Calu3 (cell line): ENCODE measurements at regions of chr1 and their contacts with region 1.

Region 1: DNA sequence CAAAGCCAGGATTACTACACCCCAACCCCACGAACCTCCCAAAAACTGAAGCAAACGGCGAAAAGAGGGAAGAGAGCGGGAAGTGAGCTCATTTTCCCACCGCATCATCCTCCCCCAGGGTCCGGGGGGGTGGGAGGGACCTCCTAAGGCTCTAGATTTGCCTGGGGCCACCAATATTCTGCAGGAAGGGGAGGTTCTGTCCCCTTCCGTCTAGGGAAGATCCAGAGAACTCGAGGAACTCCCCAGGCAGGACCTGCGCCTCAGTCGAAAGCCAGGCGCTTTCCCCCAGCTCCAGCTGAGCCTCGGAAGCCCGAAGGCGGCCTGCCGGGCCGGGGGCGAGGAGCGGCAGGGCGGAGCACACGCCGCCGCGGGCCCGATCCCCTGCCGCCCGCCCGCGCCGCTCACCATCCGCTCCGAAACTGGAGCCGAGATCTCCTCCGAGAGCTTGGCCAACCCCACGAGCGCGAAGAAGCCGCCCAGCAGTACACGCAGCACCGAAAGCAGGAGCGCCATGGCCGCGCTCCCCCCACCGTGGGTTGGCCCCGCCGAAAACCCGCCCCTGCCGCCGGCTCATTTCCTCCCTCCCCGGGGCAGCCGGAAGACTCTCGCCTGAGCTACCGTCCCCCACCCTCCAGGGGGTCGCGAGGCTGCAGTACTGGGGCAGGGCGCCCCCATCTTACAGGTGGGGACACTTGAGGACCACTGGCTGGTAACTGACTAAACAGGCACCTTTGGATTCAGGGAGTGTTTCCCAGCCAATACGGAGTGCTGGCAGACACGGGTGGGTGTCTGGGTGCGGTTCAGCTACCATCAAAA is at the start of gene TMEM35B:
- DNase-seq: peak; percentile 74
- H3K4me3 Mint-ChIP-seq: peak within 1 kb of the TSS; percentile 86
- H3K27ac Mint-ChIP-seq: peak within 1 kb of the TSS; percentile 79
- H3K4me1 Mint-ChIP-seq: peaks cover 8% of the 10 kb centered on the region
- H3K27me3 Mint-ChIP-seq: no peaks in the 10 kb centered on the region
- CTCF ChIP-seq: no peak
- total RNA-seq, gene TMEM35B: 22.6 and 27.6 TPM in 2 replicates

Region 2: GRCh38 chr1:34631126-34631525 is 353.9 kb before region 1 on chr1:
- CTCF ChIA-PET with region 1: no interaction called
- intact Hi-C with region 1: no loop called
- DNase-seq: no peak
- H3K4me3 Mint-ChIP-seq: no peak overlapping the region
- H3K27ac Mint-ChIP-seq: no peak overlapping the region
- H3K4me1 Mint-ChIP-seq: no peaks in the 10 kb centered on the region
- H3K27me3 Mint-ChIP-seq: peaks cover 39% of the 10 kb centered on the region
- CTCF ChIP-seq: no peak

Region 3: DNA sequence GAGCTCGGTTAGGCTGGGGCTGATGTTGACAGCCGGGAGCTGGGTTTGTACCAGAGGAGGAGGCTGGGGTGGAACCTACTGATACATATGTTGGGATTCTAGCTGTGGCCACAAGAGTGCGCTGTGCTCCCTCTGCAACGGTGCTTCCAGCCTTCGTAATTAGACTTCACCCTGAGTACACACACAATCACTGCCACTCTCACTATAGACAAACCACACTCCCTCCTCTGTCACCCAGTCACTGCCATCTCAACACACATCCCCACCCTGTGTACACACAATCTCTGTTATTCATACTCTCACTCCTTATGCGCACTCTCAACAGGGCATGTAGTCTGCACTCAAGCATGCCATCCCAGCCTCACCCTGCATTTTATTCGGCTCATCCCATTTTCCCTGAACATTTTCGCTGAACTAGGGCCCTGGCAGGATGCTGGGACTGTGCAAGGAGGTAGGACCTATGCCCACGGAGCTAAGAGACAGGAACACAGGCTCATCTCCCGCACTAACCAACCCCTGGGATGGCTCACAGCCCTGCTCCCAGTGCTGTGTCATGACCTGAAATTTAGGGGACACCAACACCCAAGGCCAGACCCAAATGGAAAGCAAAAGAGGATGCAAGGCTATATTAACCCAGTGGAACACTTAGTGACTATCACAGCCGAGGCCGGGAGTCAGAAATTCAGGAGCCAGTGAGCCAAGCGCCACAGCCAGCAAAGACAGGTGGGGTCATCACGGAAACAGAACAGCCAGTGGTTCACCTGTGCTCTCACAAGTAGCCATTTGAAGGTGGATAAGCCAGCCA is 198.3 kb before region 1 on chr1:
- CTCF ChIA-PET with region 1: no interaction called
- intact Hi-C with region 1: loop called (anchors 5 kb)
- DNase-seq: peak; percentile 70
- H3K4me3 Mint-ChIP-seq: no peak overlapping the region
- H3K27ac Mint-ChIP-seq: no peak overlapping the region
- H3K4me1 Mint-ChIP-seq: peaks cover 31% of the 10 kb centered on the region
- H3K27me3 Mint-ChIP-seq: peaks cover 12% of the 10 kb centered on the region
- CTCF ChIP-seq: peak; percentile 84

Region 4: GRCh38 chr1:34852677-34853217 is 132.3 kb before region 1 on chr1:
- CTCF ChIA-PET with region 1: interaction called, 3 read pairs
- intact Hi-C with region 1: loop called (anchors 10 kb)
- DNase-seq: peak; percentile 92
- H3K4me3 Mint-ChIP-seq: no peak overlapping the region
- H3K27ac Mint-ChIP-seq: no peak overlapping the region
- H3K4me1 Mint-ChIP-seq: peaks cover 6% of the 10 kb centered on the region
- H3K27me3 Mint-ChIP-seq: no peaks in the 10 kb centered on the region
- CTCF ChIP-seq: peak; percentile 97